Tibial artery (tissue), 4 donors: ENCODE measurements at regions of chr18 and their contacts with region 1.

Region 1: GRCh38 chr18:36284671-36285295 is 12.7 kb upstream of the FHOD3 start:
- DNase-seq: peak in 1 of 2 donors; percentile 45
- H3K4me3 ChIP-seq: no peak overlapping the region
- H3K27ac ChIP-seq: no peak overlapping the region
- H3K4me1 ChIP-seq: no peaks in the 10 kb centered on the region
- H3K27me3 ChIP-seq: peaks cover 0 to 4% of the 10 kb centered on the region in 2 donors
- CTCF ChIP-seq: peak; percentile 92

Region 2: GRCh38 chr18:36015629-36016028 is 269.2 kb before region 1 on chr18:
- intact Hi-C with region 1: loop called (anchors 5 kb)
- DNase-seq: no peak
- H3K4me3 ChIP-seq: no peak overlapping the region
- H3K27ac ChIP-seq: no peak overlapping the region
- H3K4me1 ChIP-seq: no peaks in the 10 kb centered on the region
- H3K27me3 ChIP-seq: no peaks in the 10 kb centered on the region
- CTCF ChIP-seq: no peak

Region 3: DNA sequence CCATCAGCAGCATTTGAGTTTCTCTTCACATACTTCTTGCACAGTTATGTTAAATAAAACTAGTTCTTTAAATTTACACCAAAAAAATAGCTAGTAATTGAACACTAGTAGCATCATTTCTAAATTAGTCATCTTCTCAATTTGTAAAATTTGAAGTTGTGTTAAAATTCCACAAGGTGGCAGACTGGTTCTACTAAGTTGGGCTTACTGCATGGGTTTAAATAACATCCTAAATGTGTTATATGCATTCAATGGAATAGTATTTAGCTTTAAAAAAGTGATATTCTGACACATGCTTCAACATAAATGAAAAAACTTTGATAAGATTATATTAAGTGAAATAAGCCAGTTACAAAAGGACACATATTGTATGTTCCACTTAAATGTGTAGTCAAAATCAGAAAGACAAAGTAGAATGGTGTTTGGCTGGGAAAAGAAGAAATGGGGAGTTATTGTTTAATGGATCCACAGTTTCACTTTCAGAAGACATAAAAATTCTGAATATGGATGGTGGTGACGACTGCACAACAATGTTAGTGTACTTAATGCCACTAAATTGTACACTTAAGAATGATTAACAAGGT is 188.8 kb before region 1 on chr18:
- intact Hi-C with region 1: loop called (anchors 2 kb)
- DNase-seq: no peak
- H3K4me3 ChIP-seq: no peak overlapping the region
- H3K27ac ChIP-seq: no peak overlapping the region
- H3K4me1 ChIP-seq: no peaks in the 10 kb centered on the region
- H3K27me3 ChIP-seq: peaks cover 0 to under 1% of the 10 kb centered on the region in 2 donors
- CTCF ChIP-seq: peak; percentile 37 to 60

Region 4: DNA sequence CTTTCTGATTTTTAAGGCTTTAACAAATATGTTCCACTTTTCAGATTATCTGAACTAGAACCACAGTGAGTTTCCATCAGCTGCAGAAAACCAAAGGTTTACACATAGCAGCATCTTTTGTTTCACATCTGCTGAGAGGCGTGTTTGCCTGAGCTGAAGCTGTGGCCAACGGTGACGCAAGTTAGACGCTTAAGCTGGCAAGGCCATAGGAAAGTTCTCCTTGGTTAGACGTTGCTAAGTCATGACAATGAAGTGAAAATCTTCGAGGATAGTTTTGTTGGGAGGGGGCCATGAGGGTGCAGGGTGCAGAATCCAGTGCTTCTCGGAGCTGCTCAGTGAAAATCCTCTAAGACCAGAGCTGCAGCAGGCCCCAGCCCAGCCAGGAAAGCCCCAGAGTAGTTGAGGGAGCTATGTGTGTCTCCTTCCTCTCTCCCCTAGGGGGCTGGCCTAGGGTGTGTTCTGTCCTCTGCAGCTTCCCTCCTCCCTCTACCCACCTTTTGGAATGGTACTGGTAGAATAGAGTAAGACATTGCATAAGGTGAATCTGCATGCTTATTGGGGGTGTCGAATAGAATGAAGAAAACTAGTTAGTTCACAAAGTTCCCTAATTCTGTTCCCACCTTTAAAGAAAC is 118.1 kb after region 1 on chr18:
- intact Hi-C with region 1: no loop called
- DNase-seq: peak; percentile 61 to 87
- H3K4me3 ChIP-seq: no peak overlapping the region
- H3K27ac ChIP-seq: peak overlapping the region; percentile 25 to 45
- H3K4me1 ChIP-seq: peaks cover 0 to 62% (median 20%) of the 10 kb centered on the region in 4 donors
- H3K27me3 ChIP-seq: no peaks in the 10 kb centered on the region
- CTCF ChIP-seq: no peak